Sciatic nerve (tissue), 2 donors: ENCODE measurements at regions of chr18 and their contacts with region 1.

Region 1: DNA sequence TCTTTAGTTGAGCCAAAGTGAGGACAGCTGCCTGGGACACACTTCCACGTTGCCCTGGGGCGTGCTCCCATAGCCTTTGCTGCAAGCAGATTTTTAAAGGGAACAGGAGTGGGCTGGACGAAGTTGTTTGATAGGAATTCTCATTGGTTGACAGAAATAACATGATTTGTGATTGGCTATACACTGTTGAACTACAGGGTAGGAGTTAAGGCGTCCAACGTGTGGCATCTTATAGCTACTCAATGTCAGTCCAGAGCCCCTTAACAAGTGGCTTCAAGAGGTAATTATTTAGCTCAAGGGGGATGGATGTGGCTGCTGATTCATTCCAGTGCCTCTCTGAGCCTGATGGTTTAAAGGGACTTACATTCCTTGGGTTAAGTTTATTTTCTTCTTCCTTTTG is 65.5 kb downstream of the ACAA2 start:
- DNase-seq: no peak
- ATAC-seq: no peak

Region 2: GRCh38 chr18:48284743-48285142 is 1463.1 kb before region 1 on chr18:
- intact Hi-C with region 1: loop called (anchors 5 kb)
- DNase-seq: no peak
- ATAC-seq: no peak

Region 3: DNA sequence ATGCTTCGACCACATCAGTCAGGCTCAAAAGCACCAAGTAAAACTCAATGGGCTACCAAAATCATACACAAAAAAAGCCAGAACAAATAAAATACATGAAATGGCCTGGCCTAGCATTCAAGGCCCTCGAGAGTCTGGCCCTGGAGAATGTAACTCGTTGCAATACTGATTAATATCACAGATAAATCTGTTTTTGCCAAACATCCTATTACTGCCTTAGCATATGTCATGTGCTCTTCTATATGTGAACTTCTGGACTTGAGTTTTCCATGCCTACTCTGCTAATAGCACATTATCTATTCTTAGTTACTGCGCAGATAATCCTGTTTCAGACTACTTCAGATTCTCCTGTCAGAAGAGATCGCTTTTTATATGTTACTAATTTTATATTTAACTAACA is 546.4 kb before region 1 on chr18:
- intact Hi-C with region 1: no loop called
- DNase-seq: no peak
- ATAC-seq: no peak